Common myeloid progenitor, CD34-positive (primary cell): ENCODE measurements at regions of chr17 and their contacts with region 1.

Region 1: DNA sequence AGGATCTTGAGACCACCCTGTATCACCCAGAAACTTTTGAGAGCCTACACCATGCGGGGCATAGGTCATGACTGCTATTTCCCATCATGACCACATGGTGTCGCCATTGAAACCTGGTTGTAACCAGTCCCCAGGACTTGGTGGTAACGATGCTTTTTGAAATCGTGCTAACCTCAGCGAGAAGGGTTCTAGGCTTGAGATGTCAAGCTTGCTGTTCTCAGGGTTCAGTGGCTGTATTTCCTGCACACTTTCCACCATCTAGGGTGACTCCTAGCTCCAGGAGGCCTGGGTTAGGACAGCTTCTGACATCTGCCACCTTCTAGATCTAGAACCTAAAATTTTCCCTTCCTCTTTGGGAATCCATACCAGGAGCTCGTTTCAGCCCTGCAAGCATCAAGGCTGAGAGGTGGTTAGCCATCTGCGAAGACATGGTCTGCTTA is 13.0 kb upstream of the SPNS3 start:
- DNase-seq: peak; percentile 83 to 90 (median 87)
- H3K4me3 ChIP-seq: no peak overlapping the region
- H3K27ac ChIP-seq: no peak overlapping the region
- H3K4me1 ChIP-seq: peaks cover 0 to 4% (median 0%) of the 10 kb centered on the region in 4 experiments
- H3K27me3 ChIP-seq: no peaks in the 10 kb centered on the region

Region 2: GRCh38 chr17:4340914-4341615 is 79.6 kb before region 1 on chr17:
- CTCF ChIA-PET with region 1: no interaction called
- POLR2A ChIA-PET with region 1: no interaction called
- DNase-seq: no peak
- H3K4me3 ChIP-seq: no peak overlapping the region
- H3K27ac ChIP-seq: no peak overlapping the region
- H3K4me1 ChIP-seq: peaks cover 0 to 4% (median under 1%) of the 10 kb centered on the region in 4 experiments
- H3K27me3 ChIP-seq: no peaks in the 10 kb centered on the region

Region 3: GRCh38 chr17:4444782-4445473 is 24.2 kb after region 1 on chr17:
- CTCF ChIA-PET with region 1: interaction called, 19 read pairs
- POLR2A ChIA-PET with region 1: interaction called, 3 read pairs
- DNase-seq: peak; percentile 95 to 99 (median 98)
- H3K4me3 ChIP-seq: peak overlapping the region in 3 of 7 experiments; percentile 11 to 48 (median 19)
- H3K27ac ChIP-seq: no peak overlapping the region
- H3K4me1 ChIP-seq: peaks cover 0 to 64% (median 36%) of the 10 kb centered on the region in 4 experiments
- H3K27me3 ChIP-seq: no peaks in the 10 kb centered on the region

Region 4: GRCh38 chr17:4509401-4509800 is 88.7 kb after region 1 on chr17:
- CTCF ChIA-PET with region 1: interaction called, 22 read pairs
- POLR2A ChIA-PET with region 1: interaction called, 3 read pairs
- DNase-seq: peak in 2 of 3 donors; percentile 60 to 67
- H3K4me3 ChIP-seq: peak overlapping the region in 5 of 7 experiments; percentile 2 to 43 (median 41)
- H3K27ac ChIP-seq: no peak overlapping the region
- H3K4me1 ChIP-seq: peaks cover 7 to 80% (median 76%) of the 10 kb centered on the region in 4 experiments
- H3K27me3 ChIP-seq: no peaks in the 10 kb centered on the region